Activated naive CD4-positive, alpha-beta T cell treated with anti-CD3 and anti-CD28 coated beads for 36 hours (primary cell): ENCODE measurements at regions of chr7 and their contacts with region 1.

Region 1: GRCh38 chr7:47945261-47946001 is 2.8 kb downstream of the PKD1L1 start:
- DNase-seq: peak; percentile 88
- H3K4me3 Mint-ChIP-seq: no peak overlapping the region
- H3K27ac Mint-ChIP-seq: no peak overlapping the region
- H3K4me1 Mint-ChIP-seq: no peaks in the 10 kb centered on the region
- H3K27me3 Mint-ChIP-seq: no peaks in the 10 kb centered on the region

Region 2: GRCh38 chr7:47698231-47698785 is 247.1 kb before region 1 on chr7:
- CTCF ChIA-PET with region 1: no interaction called
- intact Hi-C with region 1: no loop called
- DNase-seq: no peak
- H3K4me3 Mint-ChIP-seq: no peak overlapping the region
- H3K27ac Mint-ChIP-seq: no peak overlapping the region
- H3K4me1 Mint-ChIP-seq: no peaks in the 10 kb centered on the region
- H3K27me3 Mint-ChIP-seq: no peaks in the 10 kb centered on the region

Region 3: DNA sequence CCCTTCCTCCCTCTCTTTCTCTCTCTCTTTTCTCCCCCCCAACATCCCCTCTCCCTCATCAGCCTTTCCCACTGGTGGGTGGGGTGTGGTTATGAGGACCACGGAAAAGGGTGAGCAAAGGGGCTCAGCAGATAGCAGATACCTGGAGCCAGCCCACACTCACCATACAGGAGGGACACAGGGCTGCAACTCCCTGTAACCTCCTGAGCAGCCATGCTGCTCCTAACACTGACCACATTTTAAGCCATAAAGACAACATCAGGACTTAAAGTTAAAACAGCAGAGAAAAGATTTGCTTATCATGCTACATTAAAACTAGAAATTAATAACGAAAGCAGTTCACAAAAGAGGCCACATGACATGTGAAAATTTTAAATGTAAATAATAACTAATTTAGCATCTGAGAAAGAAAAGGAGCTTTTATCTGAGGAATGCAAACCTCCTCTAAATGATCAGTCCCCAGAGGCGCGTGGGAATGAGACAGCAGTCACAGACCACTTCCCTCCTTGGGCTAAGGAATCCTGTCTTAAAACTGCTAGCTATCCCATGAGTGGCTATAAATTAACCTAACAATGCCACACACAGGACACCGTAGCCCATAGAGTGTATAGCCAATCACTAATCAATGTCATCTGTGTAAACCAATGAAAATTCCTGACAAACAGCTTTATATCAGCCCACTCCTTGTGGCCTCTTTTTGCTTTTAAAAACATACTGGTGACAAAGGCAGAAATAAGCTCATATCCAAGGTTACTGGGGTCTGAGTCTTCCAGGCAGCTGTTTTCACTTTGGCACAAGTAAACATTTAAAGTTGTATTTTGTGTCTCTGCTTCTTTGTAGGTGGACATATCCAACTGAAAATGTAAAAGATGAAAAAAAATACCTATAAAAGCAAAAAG is 30.5 kb before region 1 on chr7:
- CTCF ChIA-PET with region 1: interaction called, 12 read pairs
- intact Hi-C with region 1: no loop called
- DNase-seq: no peak
- H3K4me3 Mint-ChIP-seq: no peak overlapping the region
- H3K27ac Mint-ChIP-seq: no peak overlapping the region
- H3K4me1 Mint-ChIP-seq: no peaks in the 10 kb centered on the region
- H3K27me3 Mint-ChIP-seq: no peaks in the 10 kb centered on the region

Region 4: DNA sequence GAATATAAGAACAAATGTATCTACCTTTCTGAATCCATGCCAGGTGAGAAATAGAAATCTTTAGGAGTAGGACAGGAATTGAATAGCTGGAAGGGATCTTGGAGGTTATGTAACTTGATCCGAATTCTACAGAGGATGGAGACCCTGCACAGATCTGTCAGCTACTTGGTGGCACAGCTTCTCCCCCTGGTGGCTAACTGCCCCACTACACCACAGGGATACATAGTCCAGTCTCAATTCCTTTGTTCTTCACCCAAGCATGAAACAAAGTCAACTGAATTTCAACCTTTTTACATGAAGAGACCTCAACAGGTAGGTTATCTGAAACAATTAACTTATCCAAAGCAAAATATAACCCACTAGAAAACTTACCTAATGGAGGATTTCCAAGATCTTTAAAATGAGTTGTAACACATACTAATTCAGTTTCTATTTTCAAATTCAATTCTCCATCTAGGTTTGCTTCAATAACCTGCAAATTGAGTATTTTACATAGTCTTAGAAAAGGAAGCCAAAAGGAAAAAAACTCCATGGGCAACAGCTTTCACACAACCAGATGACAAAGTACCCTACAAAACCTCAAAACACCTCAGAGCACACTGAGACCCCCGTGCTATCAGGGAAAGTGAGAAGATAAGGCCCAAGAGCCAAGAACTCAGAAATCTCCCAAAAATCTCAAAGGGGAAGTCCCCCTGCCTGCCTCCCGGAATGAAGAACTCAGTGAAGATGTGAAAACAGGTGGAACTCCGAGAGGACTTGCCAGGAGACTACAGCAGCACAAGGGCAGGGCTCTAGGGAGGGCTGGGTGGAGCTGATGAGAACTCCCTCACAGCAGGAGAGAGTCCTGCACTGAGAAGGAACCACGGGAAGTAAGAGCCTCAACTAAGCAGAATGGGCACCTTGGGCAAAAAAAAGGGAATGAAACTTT is 23.7 kb after region 1 on chr7:
- CTCF ChIA-PET with region 1: interaction called, 13 read pairs
- intact Hi-C with region 1: loop called (anchors 2 kb)
- DNase-seq: peak; percentile 62
- H3K4me3 Mint-ChIP-seq: no peak overlapping the region
- H3K27ac Mint-ChIP-seq: peak overlapping the region; percentile 53
- H3K4me1 Mint-ChIP-seq: peaks cover 37% of the 10 kb centered on the region
- H3K27me3 Mint-ChIP-seq: no peaks in the 10 kb centered on the region

Region 5: DNA sequence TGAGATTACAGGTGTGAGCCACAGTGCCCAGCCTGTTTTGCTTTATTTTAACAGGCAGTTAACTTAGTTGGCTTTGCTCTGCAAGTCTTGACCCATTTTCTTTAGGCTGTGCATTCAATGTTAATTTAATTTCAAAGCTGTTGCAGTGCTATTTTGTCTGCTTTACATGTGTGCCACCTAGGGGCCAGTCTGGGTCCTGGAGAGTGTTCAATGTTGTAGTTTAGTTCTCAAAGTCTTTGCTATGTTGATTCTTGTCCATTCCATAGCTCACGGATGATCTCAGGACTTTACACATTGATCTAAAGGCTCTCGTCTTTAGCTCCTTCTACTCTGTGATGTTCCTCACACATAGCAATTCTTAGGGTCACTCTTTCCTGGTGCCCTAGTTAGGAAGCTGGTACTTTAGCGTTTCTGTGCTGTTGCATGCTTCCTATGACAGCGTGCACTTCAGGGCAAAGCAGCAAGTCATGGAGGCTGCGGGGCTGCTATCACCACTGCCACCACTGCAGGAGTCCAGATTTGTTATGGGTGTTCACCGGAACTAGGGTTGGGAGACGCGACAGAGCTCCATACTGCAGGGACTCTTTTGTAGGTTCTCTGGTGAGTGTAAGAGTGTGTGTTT is 209.5 kb after region 1 on chr7:
- CTCF ChIA-PET with region 1: interaction called, 15 read pairs
- intact Hi-C with region 1: loop called (anchors 1 kb)
- DNase-seq: peak; percentile 55
- H3K4me3 Mint-ChIP-seq: no peak overlapping the region
- H3K27ac Mint-ChIP-seq: no peak overlapping the region
- H3K4me1 Mint-ChIP-seq: no peaks in the 10 kb centered on the region
- H3K27me3 Mint-ChIP-seq: peaks cover 21% of the 10 kb centered on the region